Right ventricle myocardium inferior (tissue), 1 donor: ENCODE measurements at regions of chr11 and their contacts with region 1.

Region 1: GRCh38 chr11:83724008-83724461 is 437.9 kb upstream of the CCDC90B start:
- DNase-seq: no peak
- ATAC-seq: peak; percentile 74

Region 2: GRCh38 chr11:83115551-83115950 is 608.5 kb before region 1 on chr11:
- intact Hi-C with region 1: no loop called
- DNase-seq: no peak
- ATAC-seq: no peak

Region 3: GRCh38 chr11:83292709-83293456 is 431.2 kb before region 1 on chr11:
- intact Hi-C with region 1: loop called (anchors 2 kb)
- DNase-seq: no peak
- ATAC-seq: no peak

Region 4: GRCh38 chr11:83326311-83326710 is 397.7 kb before region 1 on chr11:
- intact Hi-C with region 1: no loop called
- DNase-seq: no peak
- ATAC-seq: no peak

Region 5: DNA sequence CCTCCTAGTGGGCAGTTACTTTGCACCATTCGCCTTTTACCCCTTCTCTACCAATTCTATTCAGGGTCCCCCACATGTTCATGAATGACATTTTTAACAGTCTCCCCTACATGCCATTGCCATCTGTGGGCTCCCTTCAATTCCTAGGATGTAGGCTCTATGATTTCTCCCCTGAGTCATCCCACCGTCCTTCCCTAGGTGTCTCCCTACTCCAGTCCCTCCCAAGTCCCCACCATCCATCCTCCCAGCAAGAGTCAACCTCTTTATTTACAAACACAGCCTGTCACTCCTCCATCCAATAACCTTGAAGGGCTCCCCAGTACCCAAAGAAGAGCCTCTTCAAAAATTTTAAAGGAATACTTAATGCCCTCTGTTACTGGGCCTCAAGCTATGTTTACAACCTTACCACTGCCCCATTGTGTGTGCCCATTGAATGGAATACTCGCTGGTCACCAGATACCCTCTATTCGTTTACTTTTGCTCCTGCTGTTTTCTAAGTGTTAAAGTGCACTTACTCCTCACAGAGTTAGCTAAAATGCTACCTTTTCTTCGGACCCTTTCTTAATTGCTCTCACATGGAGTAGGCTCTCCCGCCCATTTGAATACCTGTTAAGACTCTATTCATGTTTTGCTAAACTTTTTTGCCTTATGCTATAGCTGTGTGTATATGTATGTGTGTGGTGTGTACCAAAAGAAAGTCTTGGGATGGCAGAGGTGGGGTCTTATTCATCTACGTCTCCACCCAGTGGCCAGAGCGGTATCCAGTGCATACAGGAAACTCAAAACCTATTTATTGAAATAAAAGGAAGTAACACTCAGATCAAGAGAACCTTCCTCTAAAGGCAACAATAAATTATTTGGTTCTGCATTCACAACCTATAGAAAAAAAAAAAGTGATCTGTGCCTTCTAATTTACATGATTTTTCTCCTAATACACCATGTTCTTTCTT is 202.1 kb before region 1 on chr11:
- intact Hi-C with region 1: loop called (anchors 5 kb)
- DNase-seq: no peak
- ATAC-seq: peak; percentile 31

Region 6: DNA sequence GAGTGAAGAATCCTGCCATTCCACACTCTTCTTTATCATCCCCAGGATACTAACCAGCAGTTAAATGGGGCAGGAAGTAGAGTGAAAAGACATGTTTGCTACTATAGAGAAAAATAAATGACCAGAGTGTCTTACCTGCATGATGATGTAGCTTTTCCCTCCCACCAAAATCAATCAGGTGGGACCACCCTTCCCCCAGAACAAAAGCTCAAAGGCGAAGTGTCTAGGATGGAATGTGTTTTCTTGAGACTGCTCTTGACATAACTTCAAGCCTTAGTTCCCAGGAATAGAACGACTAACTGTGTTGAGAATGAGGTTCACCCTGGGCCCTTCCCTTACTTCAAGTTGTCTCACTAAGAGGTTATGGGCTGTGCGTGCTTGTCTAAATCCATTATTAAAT is 98.7 kb before region 1 on chr11:
- intact Hi-C with region 1: no loop called
- DNase-seq: no peak
- ATAC-seq: no peak

Region 7: GRCh38 chr11:84398017-84398626 is 674.1 kb after region 1 on chr11:
- intact Hi-C with region 1: no loop called
- DNase-seq: no peak
- ATAC-seq: no peak